OCI-LY7 (cell line): ENCODE measurements at regions of chr6 and their contacts with region 1.

Region 1: GRCh38 chr6:52598123-52598823 is 21.4 kb upstream of the TRAM2 start:
- DNase-seq: peak; percentile 84
- H3K4me3 ChIP-seq: peak overlapping the region; percentile 19
- H3K27ac ChIP-seq: peak overlapping the region; percentile 89
- H3K4me1 ChIP-seq: peaks cover 67% of the 10 kb centered on the region
- CTCF ChIP-seq: peak; percentile 86

Region 2: GRCh38 chr6:52361945-52362442 is 236.3 kb before region 1 on chr6 and contains the start of gene PAQR8:
- CTCF ChIA-PET with region 1: no interaction called
- POLR2A ChIA-PET with region 1: no interaction called
- intact Hi-C with region 1: no loop called
- DNase-seq: peak; percentile 87
- H3K4me3 ChIP-seq: peak within 1 kb of the TSS; percentile 96
- H3K27ac ChIP-seq: peak within 1 kb of the TSS; percentile 38
- H3K4me1 ChIP-seq: peaks cover 40% of the 10 kb centered on the region
- CTCF ChIP-seq: no peak
- total RNA-seq, gene PAQR8: 5.4 and 5.5 TPM in 2 replicates

Region 3: DNA sequence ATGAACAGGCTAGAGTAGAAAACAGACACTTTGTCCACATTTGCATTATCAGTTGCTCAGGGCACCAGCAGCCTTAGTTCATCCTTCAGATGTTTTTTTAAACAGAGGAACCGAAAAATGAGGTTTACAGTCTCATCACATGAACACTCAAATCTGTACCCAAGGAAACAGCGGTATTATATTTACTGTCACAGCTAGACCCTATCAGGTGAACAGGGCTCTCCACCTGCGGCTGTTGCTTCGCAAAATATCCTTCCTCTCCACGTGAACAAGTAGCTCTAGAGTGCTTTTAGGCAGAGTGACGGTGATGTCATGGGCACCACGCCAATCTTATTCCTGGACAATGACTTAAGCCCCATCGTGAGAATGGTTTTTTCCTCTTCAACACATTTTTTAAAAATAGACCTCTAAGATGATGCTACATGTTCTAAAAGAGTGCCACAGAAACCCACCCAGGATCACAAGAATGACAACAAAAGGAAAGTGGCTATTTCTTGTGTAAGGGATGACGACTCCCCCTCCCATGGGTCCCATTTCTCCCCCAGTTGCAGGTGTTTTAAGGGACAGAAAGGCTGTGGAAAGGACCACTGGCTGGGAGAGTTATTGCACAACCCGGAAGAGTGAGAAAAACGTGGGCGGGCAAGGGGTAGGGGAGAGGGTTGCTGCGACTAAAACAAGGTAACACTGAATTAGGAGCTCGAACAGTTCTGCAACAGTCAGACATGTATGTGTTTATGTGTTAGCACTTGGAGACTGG is 100.4 kb before region 1 on chr6:
- CTCF ChIA-PET with region 1: interaction called, 6 read pairs
- POLR2A ChIA-PET with region 1: interaction called, 23 read pairs
- intact Hi-C with region 1: loop called (anchors 1 kb)
- DNase-seq: peak; percentile 95
- H3K4me3 ChIP-seq: peak overlapping the region; percentile 59
- H3K27ac ChIP-seq: peak overlapping the region; percentile 99
- H3K4me1 ChIP-seq: peaks cover 75% of the 10 kb centered on the region
- CTCF ChIP-seq: no peak

Region 4: GRCh38 chr6:52566853-52567279 is 31.4 kb before region 1 on chr6:
- CTCF ChIA-PET with region 1: no interaction called
- POLR2A ChIA-PET with region 1: interaction called, 12 read pairs
- intact Hi-C with region 1: no loop called
- DNase-seq: no peak
- H3K4me3 ChIP-seq: peak overlapping the region; percentile 31
- H3K27ac ChIP-seq: no peak overlapping the region
- H3K4me1 ChIP-seq: peaks cover 74% of the 10 kb centered on the region
- CTCF ChIP-seq: no peak

Region 5: GRCh38 chr6:52620906-52621190 is 22.6 kb after region 1 on chr6:
- CTCF ChIA-PET with region 1: no interaction called
- POLR2A ChIA-PET with region 1: no interaction called
- intact Hi-C with region 1: no loop called
- DNase-seq: no peak
- H3K4me3 ChIP-seq: no peak overlapping the region
- H3K27ac ChIP-seq: no peak overlapping the region
- H3K4me1 ChIP-seq: no peaks in the 10 kb centered on the region
- CTCF ChIP-seq: no peak

Region 6: GRCh38 chr6:52635049-52635577 is 36.8 kb after region 1 on chr6:
- CTCF ChIA-PET with region 1: no interaction called
- POLR2A ChIA-PET with region 1: interaction called, 10 read pairs
- intact Hi-C with region 1: no loop called
- DNase-seq: no peak
- H3K4me3 ChIP-seq: no peak overlapping the region
- H3K27ac ChIP-seq: no peak overlapping the region
- H3K4me1 ChIP-seq: no peaks in the 10 kb centered on the region
- CTCF ChIP-seq: no peak

Region 7: GRCh38 chr6:53014063-53014462 is 415.8 kb after region 1 on chr6:
- CTCF ChIA-PET with region 1: no interaction called
- POLR2A ChIA-PET with region 1: no interaction called
- intact Hi-C with region 1: no loop called
- DNase-seq: no peak
- H3K4me3 ChIP-seq: no peak overlapping the region
- H3K27ac ChIP-seq: no peak overlapping the region
- H3K4me1 ChIP-seq: no peaks in the 10 kb centered on the region
- CTCF ChIP-seq: no peak